CD8-positive, alpha-beta T cell (primary cell): ENCODE measurements at regions of chr1 and their contacts with region 1.

Region 1: GRCh38 chr1:13748610-13749505 is 48.9 kb downstream of the PRDM2 start:
- DNase-seq: peak; percentile 92 to 99 (median 97)
- ATAC-seq: peak; percentile 84
- H3K4me3 ChIP-seq: peak overlapping the region; percentile 68 to 70
- H3K4me3 Mint-ChIP-seq: peak overlapping the region; percentile 94
- H3K27ac ChIP-seq: peak overlapping the region; percentile 86 to 88
- H3K27ac Mint-ChIP-seq: peak overlapping the region; percentile 98
- H3K4me1 ChIP-seq: peaks cover 48% of the 10 kb centered on the region
- H3K4me1 Mint-ChIP-seq: peaks cover 52% of the 10 kb centered on the region
- H3K27me3 ChIP-seq: no peaks in the 10 kb centered on the region
- H3K27me3 Mint-ChIP-seq: no peaks in the 10 kb centered on the region
- CTCF ChIP-seq: no peak

Region 2: GRCh38 chr1:13469343-13469742 is 279.5 kb before region 1 on chr1:
- CTCF ChIA-PET with region 1: no interaction called
- POLR2A ChIA-PET with region 1: no interaction called
- intact Hi-C with region 1: no loop called
- DNase-seq: peak in 1 of 9 experiments; percentile 11
- ATAC-seq: no peak
- H3K4me3 ChIP-seq: no peak overlapping the region
- H3K4me3 Mint-ChIP-seq: no peak overlapping the region
- H3K27ac ChIP-seq: no peak overlapping the region
- H3K27ac Mint-ChIP-seq: no peak overlapping the region
- H3K4me1 ChIP-seq: no peaks in the 10 kb centered on the region
- H3K4me1 Mint-ChIP-seq: no peaks in the 10 kb centered on the region
- H3K27me3 ChIP-seq: no peaks in the 10 kb centered on the region
- H3K27me3 Mint-ChIP-seq: no peaks in the 10 kb centered on the region
- CTCF ChIP-seq: no peak

Region 3: DNA sequence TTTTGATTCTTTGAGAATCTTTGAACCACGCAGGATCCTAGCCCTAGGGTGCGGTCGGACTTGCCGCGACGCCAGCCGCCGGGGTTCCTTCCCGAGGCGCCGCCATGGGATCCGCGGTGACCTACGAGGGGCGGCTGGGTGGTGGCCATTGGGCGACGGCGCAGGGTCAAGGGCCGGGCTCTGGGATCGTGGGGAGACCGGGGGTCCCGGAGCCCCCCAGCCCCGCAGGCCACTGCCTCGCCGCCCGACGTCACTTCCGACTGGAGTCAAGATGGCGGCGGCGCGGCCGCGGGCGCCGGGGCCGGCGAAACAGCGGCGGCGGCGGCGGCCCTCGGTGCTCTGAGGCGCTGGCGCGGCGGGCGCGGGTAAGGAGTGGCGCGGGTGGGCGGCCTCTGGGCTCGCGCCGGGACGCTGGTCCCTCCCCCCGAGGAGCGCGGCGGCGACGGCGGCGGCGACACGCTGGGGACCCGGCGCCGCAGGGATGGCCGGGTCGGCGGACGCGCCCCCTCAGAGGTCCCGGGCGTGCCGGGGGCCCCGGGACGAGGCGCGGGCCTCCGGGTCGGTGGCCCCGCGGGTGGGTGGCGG is 48.8 kb before region 1 on chr1 and contains the start of gene PRDM2:
- CTCF ChIA-PET with region 1: interaction called, 4 read pairs
- POLR2A ChIA-PET with region 1: interaction called, 13 read pairs
- intact Hi-C with region 1: loop called (anchors 1 kb)
- DNase-seq: peak; percentile 38 to 85 (median 65)
- ATAC-seq: peak; percentile 43
- H3K4me3 ChIP-seq: peak within 1 kb of the TSS; percentile 67 to 80
- H3K4me3 Mint-ChIP-seq: peak within 1 kb of the TSS; percentile 92
- H3K27ac ChIP-seq: peak within 1 kb of the TSS; percentile 94 to 99
- H3K27ac Mint-ChIP-seq: peak within 1 kb of the TSS; percentile 98
- H3K4me1 ChIP-seq: peaks cover 44% of the 10 kb centered on the region
- H3K4me1 Mint-ChIP-seq: peaks cover 52% of the 10 kb centered on the region
- H3K27me3 ChIP-seq: no peaks in the 10 kb centered on the region
- H3K27me3 Mint-ChIP-seq: no peaks in the 10 kb centered on the region
- CTCF ChIP-seq: no peak
- total RNA-seq, gene PRDM2: 170 to 180 TPM

Region 4: GRCh38 chr1:13764588-13765332 is 15.9 kb after region 1 on chr1:
- CTCF ChIA-PET with region 1: interaction called, 3 read pairs
- POLR2A ChIA-PET with region 1: interaction called, 12 read pairs
- intact Hi-C with region 1: no loop called
- DNase-seq: peak in 6 of 9 experiments; percentile 13 to 70 (median 36)
- ATAC-seq: peak; percentile 29
- H3K4me3 ChIP-seq: no peak overlapping the region
- H3K4me3 Mint-ChIP-seq: no peak overlapping the region
- H3K27ac ChIP-seq: no peak overlapping the region
- H3K27ac Mint-ChIP-seq: peak overlapping the region; percentile 43
- H3K4me1 ChIP-seq: peaks cover 59% of the 10 kb centered on the region
- H3K4me1 Mint-ChIP-seq: peaks cover 85% of the 10 kb centered on the region
- H3K27me3 ChIP-seq: no peaks in the 10 kb centered on the region
- H3K27me3 Mint-ChIP-seq: no peaks in the 10 kb centered on the region
- CTCF ChIP-seq: no peak

Region 5: GRCh38 chr1:14165387-14165801 is 416.5 kb after region 1 on chr1:
- CTCF ChIA-PET with region 1: no interaction called
- POLR2A ChIA-PET with region 1: no interaction called
- intact Hi-C with region 1: no loop called
- DNase-seq: no peak
- ATAC-seq: no peak
- H3K4me3 ChIP-seq: no peak overlapping the region
- H3K4me3 Mint-ChIP-seq: no peak overlapping the region
- H3K27ac ChIP-seq: no peak overlapping the region
- H3K27ac Mint-ChIP-seq: no peak overlapping the region
- H3K4me1 ChIP-seq: no peaks in the 10 kb centered on the region
- H3K4me1 Mint-ChIP-seq: no peaks in the 10 kb centered on the region
- H3K27me3 ChIP-seq: no peaks in the 10 kb centered on the region
- H3K27me3 Mint-ChIP-seq: peaks cover 13% of the 10 kb centered on the region
- CTCF ChIP-seq: no peak